ENCODE measurements at regions of chr11 and their contacts with region 1.

Region 1: GRCh38 chr11:123020968-123021367 is 39.3 kb upstream of the BSX start:
- DNase-seq: peak; percentile 36
- ATAC-seq: peak; percentile 95
- H3K4me3 Mint-ChIP-seq: no peak overlapping the region
- H3K27ac Mint-ChIP-seq: no peak overlapping the region
- H3K4me1 Mint-ChIP-seq: peaks cover 8% of the 10 kb centered on the region
- H3K27me3 Mint-ChIP-seq: peaks cover 9% of the 10 kb centered on the region
- CTCF ChIP-seq: no peak; the same call in 1 of the 2 replicates

Region 2: DNA sequence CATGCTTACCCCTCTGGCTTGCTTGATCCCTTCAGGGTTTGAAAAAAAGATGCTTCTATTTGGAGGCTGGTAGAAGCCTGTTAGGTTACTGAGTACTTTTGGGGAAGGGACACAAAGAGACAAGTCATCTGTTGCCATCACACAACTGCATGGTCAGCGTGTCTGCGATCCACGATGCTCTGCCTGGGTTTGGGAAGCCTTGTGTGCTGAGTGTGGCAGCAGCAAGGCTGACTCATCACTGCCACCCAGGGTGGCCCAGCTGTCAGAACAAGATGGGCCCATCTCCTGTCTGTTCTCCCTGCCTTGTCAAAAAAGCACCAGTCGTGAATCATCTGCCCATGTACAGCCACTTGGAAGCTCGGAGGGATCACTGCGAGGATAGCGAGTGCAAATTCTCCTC is 339.2 kb before region 1 on chr11:
- CTCF ChIA-PET with region 1: no interaction called
- POLR2A ChIA-PET with region 1: no interaction called
- DNase-seq: no peak
- ATAC-seq: 0 out of 2 replicates have a peak, but pooled peaks have one; percentile 26
- H3K4me3 Mint-ChIP-seq: no peak overlapping the region
- H3K27ac Mint-ChIP-seq: no peak overlapping the region
- H3K4me1 Mint-ChIP-seq: peaks cover 5% of the 10 kb centered on the region
- H3K27me3 Mint-ChIP-seq: no peaks in the 10 kb centered on the region
- CTCF ChIP-seq: no peak

Region 3: DNA sequence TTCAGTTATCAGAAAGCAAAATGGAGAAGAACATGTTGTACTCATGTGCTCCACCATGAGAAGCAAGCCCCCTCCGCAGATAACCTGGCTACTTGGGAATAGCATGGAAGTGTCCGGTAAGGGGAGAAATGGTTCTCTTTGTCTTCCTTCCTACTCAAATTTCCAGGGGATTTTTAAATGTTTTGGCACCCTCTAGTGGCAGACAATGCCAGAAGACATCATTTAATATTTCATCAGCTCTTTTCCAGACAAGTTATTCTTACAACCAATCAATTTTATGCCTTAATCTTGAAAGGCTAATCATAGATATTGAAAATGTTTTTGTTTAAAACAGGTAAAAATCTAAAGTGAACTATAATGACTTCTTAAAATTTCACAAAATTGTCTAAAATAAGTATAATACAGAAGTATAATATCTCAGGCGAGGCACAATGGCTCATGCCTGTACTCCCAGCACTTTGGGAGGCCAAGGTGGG is 167.0 kb before region 1 on chr11:
- CTCF ChIA-PET with region 1: interaction called, 15 read pairs
- POLR2A ChIA-PET with region 1: no interaction called
- DNase-seq: peak; percentile 39
- ATAC-seq: peak; percentile 86
- H3K4me3 Mint-ChIP-seq: no peak overlapping the region
- H3K27ac Mint-ChIP-seq: no peak overlapping the region
- H3K4me1 Mint-ChIP-seq: peaks cover 34% of the 10 kb centered on the region
- H3K27me3 Mint-ChIP-seq: no peaks in the 10 kb centered on the region
- CTCF ChIP-seq: peak; percentile 59; the same call in 1 of the 2 replicates

Region 4: GRCh38 chr11:122882857-122883645 is 137.9 kb before region 1 on chr11:
- CTCF ChIA-PET with region 1: interaction called, 15 read pairs
- POLR2A ChIA-PET with region 1: no interaction called
- DNase-seq: no peak
- ATAC-seq: peak; percentile 63
- H3K4me3 Mint-ChIP-seq: peak overlapping the region; percentile 82
- H3K27ac Mint-ChIP-seq: no peak overlapping the region
- H3K4me1 Mint-ChIP-seq: peaks cover 41% of the 10 kb centered on the region
- H3K27me3 Mint-ChIP-seq: peaks cover 17% of the 10 kb centered on the region
- CTCF ChIP-seq: no peak

Region 5: GRCh38 chr11:122910775-122911174 is 110.2 kb before region 1 on chr11:
- CTCF ChIA-PET with region 1: interaction called, 15 read pairs
- POLR2A ChIA-PET with region 1: no interaction called
- DNase-seq: no peak
- ATAC-seq: no peak
- H3K4me3 Mint-ChIP-seq: no peak overlapping the region
- H3K27ac Mint-ChIP-seq: no peak overlapping the region
- H3K4me1 Mint-ChIP-seq: no peaks in the 10 kb centered on the region
- H3K27me3 Mint-ChIP-seq: no peaks in the 10 kb centered on the region
- CTCF ChIP-seq: no peak

Region 6: DNA sequence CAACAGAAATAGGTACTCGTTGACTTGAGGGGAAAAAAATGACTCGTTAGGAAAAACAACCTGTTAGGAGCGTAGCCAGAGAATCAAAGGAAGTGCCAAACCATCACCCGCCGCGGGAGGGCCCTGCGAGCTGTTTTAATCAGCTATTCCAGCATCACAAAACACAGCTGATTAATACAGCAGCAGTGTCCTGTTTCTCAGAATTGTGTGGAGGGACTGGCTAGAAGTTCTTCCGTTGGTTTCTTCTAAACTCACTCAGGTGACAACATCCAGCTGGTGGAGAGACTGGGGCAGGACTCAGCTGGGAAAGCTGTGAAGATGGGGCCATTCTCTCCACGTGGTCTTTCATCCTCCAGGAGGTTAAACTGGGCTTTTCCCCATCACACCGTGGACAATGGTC is 12.9 kb after region 1 on chr11:
- CTCF ChIA-PET with region 1: interaction called, 19 read pairs
- POLR2A ChIA-PET with region 1: interaction called, 4 read pairs
- DNase-seq: no peak
- ATAC-seq: no peak
- H3K4me3 Mint-ChIP-seq: no peak overlapping the region
- H3K27ac Mint-ChIP-seq: no peak overlapping the region
- H3K4me1 Mint-ChIP-seq: peaks cover 13% of the 10 kb centered on the region
- H3K27me3 Mint-ChIP-seq: no peaks in the 10 kb centered on the region; the same call in 1 of the 2 replicates
- CTCF ChIP-seq: no peak